HepG2 (cell line): ENCODE measurements at regions of chr18 and their contacts with region 1.

Region 1: DNA sequence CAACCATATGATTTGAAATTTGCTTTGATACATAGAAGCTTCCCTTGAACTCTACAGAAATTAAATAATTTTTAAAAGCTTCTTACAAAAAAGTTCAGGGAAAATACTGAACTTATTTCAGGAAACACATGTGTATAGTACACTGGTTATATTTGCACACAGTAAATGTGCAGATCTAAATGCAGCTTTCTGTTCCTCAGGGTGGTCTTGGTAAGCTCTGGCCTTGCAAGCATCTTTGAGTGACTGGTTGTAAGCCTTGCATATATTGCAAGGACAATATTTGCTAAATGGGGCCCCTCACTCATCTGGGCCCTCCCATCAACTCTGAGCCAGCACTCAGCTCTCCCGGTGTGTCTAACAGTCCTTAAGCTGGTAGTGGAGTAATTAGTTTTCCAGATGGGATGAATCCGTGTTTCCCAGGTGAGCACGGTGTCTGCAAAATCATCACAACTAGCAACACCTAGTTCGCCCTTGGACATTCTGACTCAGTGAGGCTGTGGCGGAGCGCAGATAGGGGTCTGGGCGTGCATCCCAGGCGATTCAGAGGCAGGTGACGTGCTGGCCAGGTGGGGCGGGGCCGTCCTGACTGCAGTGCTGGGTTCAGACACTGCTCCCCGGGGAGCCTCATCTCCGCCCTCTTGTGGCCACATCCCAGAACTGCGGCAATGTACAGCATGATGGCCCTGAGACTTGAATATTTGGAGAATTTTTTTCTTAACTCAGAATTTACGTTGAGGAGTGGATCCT is 149.6 kb downstream of the MBP start:
- DNase-seq: peak; percentile 74
- ATAC-seq: peak; percentile 92
- H3K4me3 ChIP-seq: peak overlapping the region in 1 of 3 experiments; percentile 40; a peak in 1 of 6 replicates
- H3K27ac ChIP-seq: no peak overlapping the region
- H3K4me1 ChIP-seq: peaks cover 30% of the 10 kb centered on the region
- H3K27me3 ChIP-seq: no peaks in the 10 kb centered on the region; a peak in 1 of 5 replicates
- CTCF ChIP-seq: peak; percentile 89
- EP300 ChIP-seq: no peak
- POLR2A ChIP-seq: no peak
- RAD21 ChIP-seq: peak; percentile 63

Region 2: DNA sequence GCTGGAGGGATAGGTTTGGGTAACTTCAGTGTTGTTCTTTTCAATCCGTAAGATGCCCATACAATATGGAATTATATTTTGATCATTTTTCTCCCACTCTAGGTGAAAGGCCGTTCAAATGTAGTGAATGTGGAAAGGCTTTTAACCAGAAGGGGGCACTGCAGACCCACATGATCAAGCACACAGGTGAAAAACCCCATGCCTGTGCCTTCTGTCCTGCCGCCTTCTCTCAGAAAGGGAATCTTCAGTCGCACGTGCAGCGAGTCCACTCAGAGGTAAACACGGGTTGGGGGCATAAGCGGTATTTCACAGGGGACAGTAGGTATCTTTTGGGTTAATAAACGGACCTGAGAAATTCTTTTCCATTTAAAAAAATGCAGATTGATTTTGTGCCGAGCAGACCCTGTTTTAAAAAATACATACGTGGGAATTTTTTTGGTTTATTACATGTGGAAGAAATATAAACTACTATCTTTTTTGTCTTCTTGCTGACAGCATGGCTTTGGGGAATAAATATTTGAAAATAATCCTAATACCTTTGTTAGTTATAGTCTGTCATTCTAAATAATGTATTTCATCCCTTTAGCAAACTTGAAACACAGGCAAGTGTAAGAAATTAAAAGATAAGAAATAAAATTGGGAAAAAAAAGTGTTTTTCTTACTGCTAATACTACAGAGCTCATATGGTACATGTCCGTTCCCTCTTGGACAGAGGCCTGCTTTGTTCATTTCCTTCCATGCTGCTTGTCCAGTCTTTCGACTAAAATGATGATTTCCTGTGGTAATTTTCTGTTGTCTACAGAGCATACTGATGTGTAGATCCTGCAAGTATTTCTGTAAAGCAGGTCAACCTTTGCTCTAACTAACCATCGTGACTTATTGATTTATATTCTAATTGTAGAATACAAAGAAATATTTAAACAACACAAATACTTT is 107.4 kb before region 1 on chr18:
- CTCF ChIA-PET with region 1: interaction called, 3 read pairs
- POLR2A ChIA-PET with region 1: no interaction called
- in situ Hi-C with region 1: no loop called
- intact Hi-C with region 1: loop called (anchors 1 kb)
- DNase-seq: peak; percentile 48
- ATAC-seq: peak; percentile 86
- H3K4me3 ChIP-seq: no peak overlapping the region
- H3K27ac ChIP-seq: no peak overlapping the region
- H3K4me1 ChIP-seq: no peaks in the 10 kb centered on the region
- H3K27me3 ChIP-seq: no peaks in the 10 kb centered on the region
- CTCF ChIP-seq: peak; percentile 75
- EP300 ChIP-seq: no peak
- POLR2A ChIP-seq: no peak
- RAD21 ChIP-seq: no peak

Region 3: DNA sequence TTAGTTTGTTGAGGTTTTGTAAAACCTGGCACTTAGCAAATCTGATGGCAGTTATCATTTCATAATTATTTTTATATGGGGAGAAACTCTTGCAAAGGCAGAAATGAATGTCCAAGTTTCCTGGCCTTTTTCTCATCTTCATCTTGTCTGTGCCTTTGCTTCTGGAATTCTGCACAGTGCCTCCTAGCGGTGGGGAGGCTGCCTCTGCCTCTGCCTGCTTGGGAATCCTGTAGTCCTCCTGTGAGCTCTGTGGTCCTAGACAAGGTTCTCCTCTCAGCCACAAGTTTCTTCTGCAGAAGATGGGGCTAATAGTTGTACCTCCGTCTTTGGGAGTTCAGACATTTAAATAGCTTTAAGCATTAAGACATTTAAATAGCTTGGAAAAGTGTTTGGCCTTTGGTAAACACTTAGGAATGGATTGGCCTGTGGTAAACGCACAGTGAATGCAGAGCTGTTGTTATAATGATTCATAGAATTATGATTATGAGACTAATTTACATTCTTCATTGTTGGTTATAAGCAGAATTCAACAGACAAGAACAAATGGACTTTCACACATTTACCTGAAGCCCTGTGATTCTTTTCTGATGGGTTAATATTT is 59.4 kb before region 1 on chr18:
- CTCF ChIA-PET with region 1: interaction called, 4 read pairs
- POLR2A ChIA-PET with region 1: no interaction called
- in situ Hi-C with region 1: no loop called
- intact Hi-C with region 1: loop called (anchors 1 kb)
- DNase-seq: peak; percentile 30
- ATAC-seq: peak; percentile 77
- H3K4me3 ChIP-seq: no peak overlapping the region
- H3K27ac ChIP-seq: no peak overlapping the region
- H3K4me1 ChIP-seq: no peaks in the 10 kb centered on the region
- H3K27me3 ChIP-seq: no peaks in the 10 kb centered on the region
- CTCF ChIP-seq: peak; percentile 60
- EP300 ChIP-seq: no peak
- POLR2A ChIP-seq: no peak
- RAD21 ChIP-seq: no peak